ENCODE measurements at regions of chr21 and their contacts with region 1.

Region 1: GRCh38 chr21:46144464-46145070 is 10.8 kb downstream of the FTCD start:
- DNase-seq: no peak

Region 2: GRCh38 chr21:46228345-46229051 is 83.9 kb after region 1 on chr21 and contains the start of gene LSS:
- intact Hi-C with region 1: loop called (anchors 10 kb)
- DNase-seq: peak; percentile 98
- total RNA-seq, gene LSS: 34.9 TPM

Region 3: GRCh38 chr21:46253610-46254124 is 109.1 kb after region 1 on chr21:
- intact Hi-C with region 1: loop called (anchors 10 kb)
- DNase-seq: no peak

Region 4: GRCh38 chr21:46442938-46443337 is 298.4 kb after region 1 on chr21:
- intact Hi-C with region 1: no loop called
- DNase-seq: no peak

Measured in cardiac septum (tissue), 1 donor.